Mammary epithelial cell (primary cell): ENCODE measurements at regions of chr14 and their contacts with region 1.

Region 1: DNA sequence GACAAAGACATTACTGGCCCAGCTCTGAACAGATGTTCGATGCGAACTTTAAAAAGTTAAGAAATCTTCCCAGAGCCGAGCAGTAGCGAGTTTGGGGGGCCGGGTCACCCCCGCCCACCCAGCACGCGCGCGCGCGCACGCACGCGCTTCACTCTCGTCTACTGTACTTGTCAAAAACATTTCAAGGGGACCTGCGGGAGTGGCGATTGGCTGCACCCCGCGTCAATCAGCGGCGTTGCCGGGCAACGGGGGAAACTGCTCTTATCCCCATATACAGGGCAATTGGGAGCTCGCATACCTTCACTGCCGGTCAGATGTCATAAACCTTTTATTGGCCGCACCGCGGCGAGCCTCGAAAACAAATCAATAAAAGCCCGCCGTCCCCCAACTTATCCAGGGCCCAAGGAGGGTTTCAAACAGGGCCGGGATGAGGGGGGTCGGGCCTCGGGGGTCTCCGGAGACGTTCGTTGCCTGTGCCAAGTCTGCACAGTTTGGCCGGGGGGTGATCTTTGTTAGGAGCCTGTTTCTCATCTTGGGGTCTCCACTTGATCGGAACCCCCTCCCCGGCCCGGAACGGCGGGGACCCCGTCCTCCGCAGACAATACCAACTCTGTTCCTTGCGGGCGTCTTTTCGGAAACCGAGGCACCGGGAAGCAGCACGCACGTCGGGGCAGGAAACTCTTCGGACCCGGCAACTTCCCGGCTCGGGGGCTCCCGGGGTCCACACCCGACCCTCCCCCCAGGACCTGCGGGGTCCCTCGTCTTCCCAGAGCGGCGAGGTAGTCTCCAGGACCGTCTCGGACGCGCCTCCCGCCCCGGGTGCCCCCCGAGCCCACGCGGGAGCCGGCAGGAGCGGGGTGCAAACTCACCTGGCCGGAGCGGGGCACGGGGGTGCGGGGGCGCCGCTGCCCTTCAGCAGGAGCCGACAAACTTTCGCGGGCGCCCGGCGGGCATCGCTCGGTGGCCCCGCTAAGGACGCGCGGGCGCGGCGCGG is 734 bp downstream of the FOXN3 start:
- DNase-seq: peak; percentile 99
- H3K4me3 ChIP-seq: peak overlapping the region; percentile 80 to 92 (median 87)
- H3K27ac ChIP-seq: peak overlapping the region; percentile 47
- H3K4me1 ChIP-seq: peaks cover 6% of the 10 kb centered on the region
- H3K27me3 ChIP-seq: peaks cover 2% of the 10 kb centered on the region
- CTCF ChIP-seq: no peak

Region 2: GRCh38 chr14:89040460-89041259 is 375.6 kb before region 1 on chr14:
- CTCF ChIA-PET with region 1: no interaction called
- dilution Hi-C with region 1: no loop called
- in situ Hi-C with region 1: loop called in 1 of 2 experiments (anchors 25 kb)
- intact Hi-C with region 1: loop called (anchors 1 kb)
- DNase-seq: peak; percentile 82
- H3K4me3 ChIP-seq: peak overlapping the region; percentile 28 to 47 (median 47)
- H3K27ac ChIP-seq: peak overlapping the region; percentile 69
- H3K4me1 ChIP-seq: peaks cover 14% of the 10 kb centered on the region
- H3K27me3 ChIP-seq: no peaks in the 10 kb centered on the region
- CTCF ChIP-seq: peak; percentile 95 to 99

Region 3: GRCh38 chr14:89231426-89232113 is 184.7 kb before region 1 on chr14:
- CTCF ChIA-PET with region 1: interaction called, 11 read pairs
- dilution Hi-C with region 1: no loop called
- in situ Hi-C with region 1: no loop called
- intact Hi-C with region 1: no loop called
- DNase-seq: no peak
- H3K4me3 ChIP-seq: no peak overlapping the region
- H3K27ac ChIP-seq: no peak overlapping the region
- H3K4me1 ChIP-seq: no peaks in the 10 kb centered on the region
- H3K27me3 ChIP-seq: no peaks in the 10 kb centered on the region
- CTCF ChIP-seq: no peak

Region 4: GRCh38 chr14:89336338-89336737 is 80.0 kb before region 1 on chr14:
- CTCF ChIA-PET with region 1: no interaction called
- dilution Hi-C with region 1: no loop called
- in situ Hi-C with region 1: no loop called
- intact Hi-C with region 1: no loop called
- DNase-seq: no peak
- H3K4me3 ChIP-seq: no peak overlapping the region
- H3K27ac ChIP-seq: no peak overlapping the region
- H3K4me1 ChIP-seq: no peaks in the 10 kb centered on the region
- H3K27me3 ChIP-seq: no peaks in the 10 kb centered on the region
- CTCF ChIP-seq: peak in 1 of 2 donors; percentile 2

Region 5: DNA sequence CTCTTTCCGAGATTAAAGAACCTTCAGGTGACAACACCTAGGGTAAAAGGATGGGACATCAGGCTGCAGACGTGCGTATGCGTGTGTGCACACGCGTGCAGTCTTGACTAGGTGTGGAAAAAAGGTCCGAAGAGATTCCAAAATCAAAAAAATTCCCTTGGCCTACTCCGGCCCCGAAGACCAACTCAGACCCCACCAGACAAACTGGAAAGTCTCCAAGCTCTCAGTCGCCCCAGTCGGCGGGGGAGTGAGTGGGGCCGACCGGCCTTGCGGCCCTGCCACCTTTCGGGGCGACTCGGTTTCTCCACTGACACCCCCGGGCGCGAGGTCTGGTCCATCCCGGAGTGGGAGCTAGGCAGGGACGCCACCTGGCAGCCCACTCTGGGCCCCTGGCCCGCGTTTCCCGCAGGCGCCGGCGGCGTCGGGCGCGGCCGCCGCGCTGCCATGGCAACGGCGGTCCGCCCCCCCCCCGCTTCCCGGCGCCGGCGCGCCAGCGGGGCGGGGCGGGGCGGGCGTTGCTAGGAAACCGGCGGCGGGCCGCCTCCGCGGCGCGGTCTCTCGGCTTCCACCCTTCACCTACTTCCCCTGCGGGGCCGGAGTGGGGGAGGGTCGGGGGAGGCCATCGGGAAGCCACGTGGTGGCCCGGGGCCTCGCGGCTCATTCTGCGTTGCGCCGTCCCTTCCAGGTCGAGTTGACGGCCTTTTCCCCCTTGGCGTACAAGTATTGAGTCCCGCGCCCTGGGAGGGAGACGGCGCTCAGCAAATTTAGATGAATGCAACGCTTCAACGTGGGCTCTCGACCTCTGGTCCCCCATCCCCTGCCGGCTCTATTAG is 285.1 kb after region 1 on chr14:
- CTCF ChIA-PET with region 1: no interaction called
- dilution Hi-C with region 1: no loop called
- in situ Hi-C with region 1: no loop called
- intact Hi-C with region 1: loop called (anchors 10 kb)
- DNase-seq: peak; percentile 39
- H3K4me3 ChIP-seq: peak overlapping the region; percentile 42 to 56 (median 50)
- H3K27ac ChIP-seq: no peak overlapping the region
- H3K4me1 ChIP-seq: peaks cover 11% of the 10 kb centered on the region
- H3K27me3 ChIP-seq: no peaks in the 10 kb centered on the region
- CTCF ChIP-seq: no peak

Region 6: GRCh38 chr14:89855961-89856656 is 439.8 kb after region 1 on chr14:
- CTCF ChIA-PET with region 1: no interaction called
- dilution Hi-C with region 1: no loop called
- in situ Hi-C with region 1: no loop called
- intact Hi-C with region 1: loop called (anchors 10 kb)
- DNase-seq: peak; percentile 68
- H3K4me3 ChIP-seq: no peak overlapping the region
- H3K27ac ChIP-seq: no peak overlapping the region
- H3K4me1 ChIP-seq: peaks cover 10% of the 10 kb centered on the region
- H3K27me3 ChIP-seq: no peaks in the 10 kb centered on the region
- CTCF ChIP-seq: no peak